ENCODE measurements at regions of chr1 and their contacts with region 1.

Region 1: DNA sequence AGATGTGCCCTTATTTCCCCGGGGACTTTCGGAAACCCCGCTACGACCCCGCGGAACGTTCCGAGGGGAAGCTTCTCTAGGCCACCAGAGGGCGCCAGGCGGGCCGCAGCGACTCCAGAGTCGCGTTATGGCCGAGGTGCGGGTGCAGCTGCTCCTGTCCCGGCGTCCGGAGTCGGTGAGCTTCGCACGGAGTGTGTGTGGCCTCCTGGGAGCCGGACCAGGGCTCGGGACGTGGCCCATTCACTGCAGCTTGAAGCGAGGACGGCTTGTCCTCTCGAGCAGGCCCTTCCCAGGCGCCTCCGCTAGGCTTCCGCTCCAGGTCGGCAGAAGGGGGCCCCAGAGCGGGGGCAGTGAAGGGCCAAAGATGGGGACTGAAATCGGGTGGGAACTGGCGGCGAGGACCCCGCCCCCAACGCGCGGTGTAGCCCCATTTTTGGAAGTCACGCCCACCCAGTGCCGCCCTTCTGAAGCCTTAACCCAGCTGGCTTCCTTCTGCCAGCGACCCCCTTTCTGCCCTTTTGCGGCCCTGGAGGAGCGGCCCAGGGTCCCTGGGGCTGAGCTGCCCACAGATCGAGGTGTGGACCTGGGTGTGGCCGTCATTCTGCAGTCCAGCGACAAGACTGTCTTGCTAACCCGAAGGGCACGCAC is at the start of gene NUDT17:
- DNase-seq: peak; percentile 85
- ATAC-seq: peak; percentile 88
- H3K4me3 Mint-ChIP-seq: no peak within 1 kb of the TSS
- H3K27ac Mint-ChIP-seq: peak within 1 kb of the TSS; percentile 72
- H3K4me1 Mint-ChIP-seq: peaks cover 7% of the 10 kb centered on the region
- H3K27me3 Mint-ChIP-seq: no peaks in the 10 kb centered on the region
- total RNA-seq, gene NUDT17: 2.2 to 3.8 TPM

Region 2: GRCh38 chr1:145804235-145805045 is 41.2 kb before region 1 on chr1:
- CTCF ChIA-PET with region 1: interaction called, 16 read pairs
- POLR2A ChIA-PET with region 1: interaction called, 3 read pairs
- DNase-seq: no peak
- ATAC-seq: no peak
- H3K4me3 Mint-ChIP-seq: no peak overlapping the region
- H3K27ac Mint-ChIP-seq: no peak overlapping the region
- H3K4me1 Mint-ChIP-seq: peaks cover 9% of the 10 kb centered on the region
- H3K27me3 Mint-ChIP-seq: no peaks in the 10 kb centered on the region

Region 3: DNA sequence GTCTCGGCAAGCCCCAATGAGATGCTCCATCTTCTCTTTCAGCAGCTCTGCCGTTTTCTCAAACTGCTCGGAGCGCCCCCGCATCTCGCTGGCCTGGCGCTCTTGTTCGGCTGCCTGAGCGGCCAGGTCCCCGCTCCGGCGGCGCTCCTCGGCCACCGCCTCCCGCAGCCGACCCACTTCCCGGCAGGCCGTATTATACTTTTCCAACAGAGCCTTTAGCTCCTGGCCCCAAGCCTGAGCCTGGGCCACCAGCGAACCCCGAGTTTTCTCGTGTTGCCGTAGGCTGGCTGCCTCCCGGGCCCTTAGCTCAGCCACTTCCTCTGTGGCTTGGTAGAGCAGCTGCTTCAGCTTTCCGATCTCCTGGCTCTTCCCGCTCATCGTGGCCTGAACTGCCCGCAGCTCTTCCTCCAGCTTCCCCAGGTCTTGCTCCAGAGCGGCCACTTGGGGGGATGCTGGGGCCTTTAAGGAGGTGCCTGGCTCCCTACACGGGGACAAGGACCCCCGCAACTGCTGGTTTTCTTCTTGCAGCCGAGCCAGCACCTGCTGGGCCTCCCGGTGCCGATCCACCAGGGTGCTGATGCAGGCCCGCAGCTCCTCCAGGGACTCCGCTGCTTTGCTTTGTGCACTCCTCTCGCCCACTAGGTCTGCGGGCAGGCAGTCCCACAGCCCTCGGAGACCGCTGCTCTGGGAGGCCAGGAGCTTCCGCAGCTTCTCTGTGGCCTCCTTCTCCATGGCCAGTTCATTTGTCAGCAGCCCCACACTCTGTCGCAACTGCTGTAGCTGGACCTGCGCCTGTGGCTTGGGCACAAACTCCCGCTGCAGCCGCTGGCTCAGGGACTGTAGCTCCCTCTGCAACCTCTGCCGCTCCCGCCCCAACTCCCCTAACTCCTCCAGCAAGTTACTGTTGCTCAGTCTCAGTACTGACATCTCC is 26.6 kb after region 1 on chr1:
- CTCF ChIA-PET with region 1: interaction called, 98 read pairs
- POLR2A ChIA-PET with region 1: interaction called, 3 read pairs
- DNase-seq: peak; percentile 59
- ATAC-seq: peak; percentile 92
- H3K4me3 Mint-ChIP-seq: peak overlapping the region; percentile 67
- H3K27ac Mint-ChIP-seq: peak overlapping the region; percentile 81
- H3K4me1 Mint-ChIP-seq: peaks cover 20% of the 10 kb centered on the region
- H3K27me3 Mint-ChIP-seq: peaks cover 17% of the 10 kb centered on the region

Region 4: DNA sequence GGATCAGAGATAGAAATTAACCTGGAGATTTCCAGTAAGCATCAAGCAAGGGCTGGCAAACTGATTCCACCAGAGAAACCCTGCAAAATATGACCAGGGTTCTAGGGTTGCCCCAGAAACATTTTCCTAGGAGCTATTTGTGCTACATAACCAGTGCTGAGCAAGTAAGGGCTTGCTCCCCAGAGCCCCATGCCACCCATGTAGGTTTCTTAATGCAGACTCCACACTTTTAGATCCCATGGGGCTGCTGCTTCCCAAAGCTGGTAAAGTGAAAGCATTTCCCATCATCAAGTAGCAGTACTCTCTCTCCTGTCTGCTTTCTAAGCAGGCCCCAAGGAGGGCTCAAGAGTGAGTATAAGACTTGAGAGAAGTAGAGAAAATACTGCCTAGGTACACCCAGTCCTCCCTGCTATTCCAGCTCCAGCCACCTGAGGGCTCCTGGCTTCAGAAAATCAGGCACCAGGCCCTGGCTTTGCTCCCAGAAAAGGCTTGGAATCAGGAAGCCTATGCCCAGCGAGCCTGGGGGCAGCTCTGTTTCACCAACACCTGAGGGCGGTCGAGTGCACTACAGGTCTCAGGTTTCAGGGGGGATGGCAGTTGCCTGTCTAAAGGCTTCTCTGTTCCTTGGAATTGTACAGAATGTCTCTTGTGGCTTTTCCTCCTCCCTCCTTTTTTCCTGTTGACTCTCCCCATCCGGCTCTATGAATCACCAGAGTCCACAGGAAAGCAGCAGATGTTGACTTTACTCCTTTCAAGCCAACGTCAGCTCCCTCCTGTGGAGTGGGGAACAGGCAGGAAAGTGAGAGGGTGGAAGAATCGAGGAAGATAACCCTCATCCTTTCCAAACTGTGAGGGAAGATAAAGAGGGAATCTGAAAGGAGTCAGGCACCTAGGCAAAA is 46.2 kb after region 1 on chr1:
- CTCF ChIA-PET with region 1: interaction called, 49 read pairs
- POLR2A ChIA-PET with region 1: no interaction called
- DNase-seq: peak; percentile 62
- ATAC-seq: peak; percentile 78
- H3K4me3 Mint-ChIP-seq: no peak overlapping the region
- H3K27ac Mint-ChIP-seq: peak overlapping the region; percentile 40
- H3K4me1 Mint-ChIP-seq: peaks cover 1% of the 10 kb centered on the region
- H3K27me3 Mint-ChIP-seq: no peaks in the 10 kb centered on the region

Region 5: DNA sequence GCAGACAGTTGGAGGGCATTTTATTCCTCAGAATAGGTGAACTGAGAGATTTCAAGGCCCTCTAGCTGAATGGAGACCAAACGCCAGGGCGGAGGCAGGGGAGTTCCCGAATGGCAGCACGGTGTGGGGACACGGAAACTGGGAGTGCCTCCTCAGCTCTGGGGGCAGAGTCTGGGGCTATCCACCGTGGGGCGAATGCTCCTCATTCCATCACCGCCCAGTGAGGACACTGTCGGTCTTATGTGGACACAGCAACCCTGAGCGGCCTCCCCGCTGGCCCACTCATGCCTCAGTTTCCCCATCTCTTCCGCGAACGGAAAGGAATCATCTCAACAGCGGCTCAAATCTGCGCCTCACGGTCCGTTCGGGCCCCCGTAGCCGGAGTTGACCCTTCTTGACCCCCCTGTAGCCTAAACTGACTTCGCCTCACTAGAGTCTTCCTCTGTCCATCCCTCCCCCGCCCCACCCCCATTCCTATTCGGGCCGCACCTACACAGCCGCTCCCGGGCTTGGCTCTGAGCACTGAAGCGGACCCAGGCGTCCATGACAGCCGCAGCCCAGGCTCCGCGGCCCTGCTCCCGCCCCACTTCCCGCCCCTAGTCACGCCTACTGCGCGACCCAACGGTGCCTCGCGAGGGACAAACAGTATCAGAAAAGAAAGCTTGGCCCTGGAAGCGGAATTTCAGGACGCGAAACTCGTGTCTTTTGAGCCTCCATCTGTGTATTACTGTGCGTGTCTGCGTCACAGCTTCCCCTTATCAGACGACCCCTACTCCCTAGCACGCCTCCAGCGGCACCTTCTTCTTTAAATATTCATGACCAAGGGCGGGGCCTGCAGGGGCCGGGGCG is 72.7 kb after region 1 on chr1 and contains the start of gene PEX11B:
- CTCF ChIA-PET with region 1: interaction called, 15 read pairs
- POLR2A ChIA-PET with region 1: interaction called, 5 read pairs
- DNase-seq: peak; percentile 94
- ATAC-seq: peak; percentile 94
- H3K4me3 Mint-ChIP-seq: peak within 1 kb of the TSS; percentile 92
- H3K27ac Mint-ChIP-seq: peak within 1 kb of the TSS; percentile 99
- H3K4me1 Mint-ChIP-seq: peaks cover 34% of the 10 kb centered on the region
- H3K27me3 Mint-ChIP-seq: no peaks in the 10 kb centered on the region
- total RNA-seq, gene PEX11B: 33.3 to 35.9 TPM

Region 6: DNA sequence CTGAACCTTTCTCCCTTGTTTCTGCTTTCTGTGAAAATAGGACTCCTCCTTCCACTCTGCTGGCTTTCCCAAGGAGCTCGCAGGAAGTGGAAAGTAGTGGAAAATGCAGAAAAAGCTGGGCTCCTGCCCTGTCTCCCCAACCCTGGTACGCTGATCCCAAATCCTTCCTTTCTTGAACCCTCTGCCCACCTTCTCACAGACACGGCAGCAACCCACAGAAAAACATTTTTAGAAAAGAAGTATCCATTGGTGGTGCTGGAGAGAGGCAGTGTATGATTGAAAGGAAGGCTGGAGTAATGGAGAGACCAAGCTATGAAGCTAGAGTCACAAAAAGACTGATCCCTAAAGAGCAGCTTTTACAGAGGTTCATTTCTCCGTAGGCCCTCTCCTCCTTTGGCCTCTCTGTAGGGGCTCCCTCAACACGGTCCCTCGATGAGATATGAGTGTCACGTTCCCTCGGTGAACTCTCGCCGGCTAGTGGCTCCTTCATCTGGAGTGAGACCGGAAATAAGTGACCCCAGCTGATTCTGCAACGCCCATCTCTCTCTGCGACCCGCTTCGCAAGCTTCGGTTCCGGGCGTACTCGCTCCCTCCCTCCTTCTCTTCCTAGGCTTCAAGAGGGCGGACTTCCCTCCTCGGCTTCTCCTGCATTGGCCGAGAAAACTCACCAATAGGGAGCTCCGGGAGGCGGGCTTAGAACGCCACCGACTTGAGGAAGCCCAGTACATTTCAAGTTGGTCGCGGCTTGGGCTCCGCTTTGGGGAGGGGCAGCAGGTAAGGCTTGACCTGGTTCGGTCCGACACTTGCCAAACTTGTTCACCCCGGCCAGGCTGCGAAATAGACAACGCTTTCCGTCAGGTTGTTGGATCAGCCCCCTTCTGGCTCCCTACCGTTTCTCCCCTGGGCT is 118.6 kb after region 1 on chr1 and contains the starts of genes ANKRD34A and POLR3GL:
- CTCF ChIA-PET with region 1: interaction called, 52 read pairs
- POLR2A ChIA-PET with region 1: interaction called, 6 read pairs
- DNase-seq: peak; percentile 96
- ATAC-seq: peak; percentile 92
- H3K4me3 Mint-ChIP-seq: peak within 1 kb of the TSS; percentile 93
- H3K27ac Mint-ChIP-seq: peak within 1 kb of the TSS; percentile 91
- H3K4me1 Mint-ChIP-seq: peaks cover 50% of the 10 kb centered on the region
- H3K27me3 Mint-ChIP-seq: no peaks in the 10 kb centered on the region
- total RNA-seq, gene ANKRD34A: 1.8 to 2.4 TPM
- total RNA-seq, gene POLR3GL: 25.0 to 26.5 TPM

Region 7: DNA sequence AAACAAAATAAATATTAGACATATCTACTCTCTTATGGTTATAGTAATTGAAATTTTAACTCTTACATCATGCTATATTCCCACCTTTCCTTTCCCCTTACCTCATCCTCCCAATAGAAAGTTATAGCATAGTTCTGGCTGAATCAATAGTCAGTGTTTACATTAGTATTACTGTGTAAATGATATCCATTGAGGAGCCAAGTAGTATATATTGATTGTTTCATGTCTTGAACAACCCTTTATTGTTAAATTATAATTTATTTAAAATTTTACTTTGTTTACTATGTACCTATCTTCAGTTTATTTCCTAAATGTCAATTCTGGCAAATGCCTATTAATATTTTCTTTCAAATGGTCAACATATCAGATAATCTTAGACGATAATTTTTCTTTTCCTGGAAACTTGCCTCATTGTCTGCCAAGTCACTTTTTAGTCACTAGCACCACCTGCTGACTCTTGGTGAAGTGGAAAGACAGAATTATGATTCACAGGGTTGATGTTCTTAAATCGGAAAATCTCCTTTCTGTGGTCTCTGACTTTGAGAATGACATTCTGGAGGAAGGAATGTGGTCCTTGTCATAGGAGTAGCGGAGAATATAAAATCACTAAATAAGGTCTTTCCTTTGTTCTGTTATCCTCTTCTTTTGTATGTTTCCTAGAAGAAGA is 167.2 kb after region 1 on chr1:
- CTCF ChIA-PET with region 1: interaction called, 76 read pairs
- POLR2A ChIA-PET with region 1: no interaction called
- DNase-seq: peak; percentile 77
- ATAC-seq: peak; percentile 84
- H3K4me3 Mint-ChIP-seq: no peak overlapping the region
- H3K27ac Mint-ChIP-seq: no peak overlapping the region
- H3K4me1 Mint-ChIP-seq: peaks cover 13% of the 10 kb centered on the region
- H3K27me3 Mint-ChIP-seq: peaks cover 19% of the 10 kb centered on the region

Measured in activated CD8-positive, alpha-beta T cell treated with anti-CD3 and anti-CD28 coated beads, Interleukin-2, amount 10 ng/mL, durations not matched to agents 7 days and 5 days (primary cell).